ENCODE measurements at regions of chr3 and their contacts with region 1.

Region 1: GRCh38 chr3:138915503-138916498 is 31.1 kb downstream of the FOXL2 start:
- DNase-seq: peak; percentile 72 to 79 (median 75)
- H3K4me3 ChIP-seq: peak overlapping the region; percentile 69 to 73
- H3K4me3 Mint-ChIP-seq: peak overlapping the region; percentile 69 to 89 (median 86)
- H3K27ac ChIP-seq: peak overlapping the region; percentile 27
- H3K27ac Mint-ChIP-seq: peak overlapping the region in 6 of 7 donors; percentile 8 to 75 (median 62)
- H3K4me1 ChIP-seq: peaks cover 7% of the 10 kb centered on the region
- H3K4me1 Mint-ChIP-seq: peaks cover 3 to 6% (median 4%) of the 10 kb centered on the region in 4 donors
- H3K27me3 ChIP-seq: no peaks in the 10 kb centered on the region
- H3K27me3 Mint-ChIP-seq: peaks cover 2 to 6% of the 10 kb centered on the region in 2 donors

Region 2: DNA sequence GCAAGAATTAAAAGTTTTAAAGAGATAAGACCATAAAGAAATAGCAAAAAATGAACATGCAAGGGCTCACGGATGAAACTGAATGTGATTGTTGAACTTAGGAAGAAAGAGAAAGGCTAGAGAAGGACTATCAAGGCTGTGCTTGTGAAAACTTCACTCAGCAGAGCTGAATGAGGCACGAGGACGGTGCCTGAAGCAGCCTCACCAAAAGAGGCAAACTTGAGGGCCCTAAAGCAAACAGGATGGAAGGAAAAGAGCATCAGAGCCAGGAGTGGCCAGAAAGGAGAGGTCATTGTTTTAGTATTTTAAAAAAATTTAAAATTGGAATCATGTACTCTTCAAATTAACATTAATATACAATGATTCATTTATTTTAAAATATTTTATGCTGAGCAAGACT is 1342.9 kb before region 1 on chr3:
- CTCF ChIA-PET with region 1: no interaction called
- POLR2A ChIA-PET with region 1: no interaction called
- intact Hi-C with region 1: no loop called
- DNase-seq: no peak
- H3K4me3 ChIP-seq: no peak overlapping the region
- H3K4me3 Mint-ChIP-seq: no peak overlapping the region
- H3K27ac ChIP-seq: no peak overlapping the region
- H3K27ac Mint-ChIP-seq: no peak overlapping the region
- H3K4me1 ChIP-seq: no peaks in the 10 kb centered on the region
- H3K4me1 Mint-ChIP-seq: no peaks in the 10 kb centered on the region
- H3K27me3 ChIP-seq: no peaks in the 10 kb centered on the region
- H3K27me3 Mint-ChIP-seq: no peaks in the 10 kb centered on the region

Region 3: GRCh38 chr3:138329127-138329983 is 586.4 kb before region 1 on chr3 and contains the start of gene NME9:
- CTCF ChIA-PET with region 1: interaction called, 4 read pairs
- POLR2A ChIA-PET with region 1: no interaction called
- intact Hi-C with region 1: loop called (anchors 5 kb)
- DNase-seq: peak; percentile 85 to 90 (median 89)
- H3K4me3 ChIP-seq: peak within 1 kb of the TSS; percentile 49 to 68
- H3K4me3 Mint-ChIP-seq: peak within 1 kb of the TSS; percentile 95 to 99 (median 98)
- H3K27ac ChIP-seq: peak within 1 kb of the TSS; percentile 72
- H3K27ac Mint-ChIP-seq: peak within 1 kb of the TSS; percentile 81 to 99 (median 98)
- H3K4me1 ChIP-seq: peaks cover 10% of the 10 kb centered on the region
- H3K4me1 Mint-ChIP-seq: peaks cover 17 to 41% (median 25%) of the 10 kb centered on the region in 4 donors
- H3K27me3 ChIP-seq: no peaks in the 10 kb centered on the region
- H3K27me3 Mint-ChIP-seq: no peaks in the 10 kb centered on the region
- total RNA-seq, gene NME9: 1.0 to 1.4 TPM

Region 4: GRCh38 chr3:138686771-138687221 is 229.0 kb before region 1 on chr3:
- CTCF ChIA-PET with region 1: interaction called, 739 read pairs
- POLR2A ChIA-PET with region 1: no interaction called
- intact Hi-C with region 1: no loop called
- DNase-seq: no peak
- H3K4me3 ChIP-seq: no peak overlapping the region
- H3K4me3 Mint-ChIP-seq: no peak overlapping the region
- H3K27ac ChIP-seq: no peak overlapping the region
- H3K27ac Mint-ChIP-seq: peak overlapping the region in 2 of 7 donors; percentile 2 to 52
- H3K4me1 ChIP-seq: no peaks in the 10 kb centered on the region
- H3K4me1 Mint-ChIP-seq: no peaks in the 10 kb centered on the region
- H3K27me3 ChIP-seq: no peaks in the 10 kb centered on the region
- H3K27me3 Mint-ChIP-seq: no peaks in the 10 kb centered on the region

Region 5: GRCh38 chr3:138717348-138717747 is 198.5 kb before region 1 on chr3:
- CTCF ChIA-PET with region 1: interaction called, 24 read pairs
- POLR2A ChIA-PET with region 1: interaction called, 3 read pairs
- intact Hi-C with region 1: no loop called
- DNase-seq: no peak
- H3K4me3 ChIP-seq: no peak overlapping the region
- H3K4me3 Mint-ChIP-seq: no peak overlapping the region
- H3K27ac ChIP-seq: no peak overlapping the region
- H3K27ac Mint-ChIP-seq: no peak overlapping the region
- H3K4me1 ChIP-seq: no peaks in the 10 kb centered on the region
- H3K4me1 Mint-ChIP-seq: peaks cover 1 to 6% (median 5%) of the 10 kb centered on the region in 4 donors
- H3K27me3 ChIP-seq: no peaks in the 10 kb centered on the region
- H3K27me3 Mint-ChIP-seq: no peaks in the 10 kb centered on the region

Region 6: GRCh38 chr3:138747225-138747624 is 168.6 kb before region 1 on chr3:
- CTCF ChIA-PET with region 1: interaction called, 17 read pairs
- POLR2A ChIA-PET with region 1: no interaction called
- intact Hi-C with region 1: no loop called
- DNase-seq: no peak
- H3K4me3 ChIP-seq: no peak overlapping the region
- H3K4me3 Mint-ChIP-seq: no peak overlapping the region
- H3K27ac ChIP-seq: no peak overlapping the region
- H3K27ac Mint-ChIP-seq: peak overlapping the region in 1 of 7 donors; percentile 3
- H3K4me1 ChIP-seq: no peaks in the 10 kb centered on the region
- H3K4me1 Mint-ChIP-seq: peaks cover 0 to 7% (median 5%) of the 10 kb centered on the region in 4 donors
- H3K27me3 ChIP-seq: no peaks in the 10 kb centered on the region
- H3K27me3 Mint-ChIP-seq: no peaks in the 10 kb centered on the region

Region 7: DNA sequence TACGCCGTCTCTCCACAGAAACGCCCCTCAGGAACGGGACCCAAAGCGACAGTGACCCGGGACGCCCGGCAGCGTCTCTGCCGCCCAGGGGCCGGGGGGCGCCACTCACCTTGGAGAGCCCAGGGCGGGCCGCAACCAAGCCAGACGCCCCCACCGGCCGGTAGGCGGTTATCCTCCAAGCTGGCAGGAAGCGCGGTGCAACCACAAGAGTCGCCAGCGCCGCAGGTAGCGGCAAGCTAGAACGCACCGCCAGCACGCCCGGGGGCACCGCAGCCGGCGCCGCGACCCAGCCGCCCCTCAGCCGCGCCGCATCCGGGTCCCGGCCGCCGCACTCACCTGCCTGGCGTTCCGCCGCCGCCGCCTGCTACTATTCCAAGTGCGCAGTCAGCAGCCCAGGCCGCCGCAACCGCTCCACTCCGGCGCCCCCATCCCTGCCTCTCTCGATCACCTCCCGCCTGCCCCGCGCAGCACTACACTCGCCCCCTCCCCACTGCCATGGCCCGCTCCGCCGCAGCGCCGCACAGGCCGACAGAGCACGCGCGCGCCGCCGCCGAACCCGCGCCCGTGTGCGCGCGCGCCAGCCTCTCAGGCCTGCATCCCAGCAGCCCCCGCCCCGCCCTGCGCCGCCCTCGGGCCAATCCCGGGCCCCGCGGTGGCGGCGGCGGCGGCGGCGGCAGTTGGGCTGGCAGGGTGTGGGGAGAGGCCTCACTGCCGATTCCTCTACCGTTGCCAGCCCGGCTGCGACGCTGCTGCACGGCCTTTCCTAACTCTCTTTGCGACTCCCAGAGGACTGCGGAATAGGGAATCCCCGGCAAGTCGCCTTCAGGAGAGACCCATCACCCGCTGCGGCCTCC is 81.2 kb before region 1 on chr3 and contains the start of gene PIK3CB:
- CTCF ChIA-PET with region 1: interaction called, 17 read pairs
- POLR2A ChIA-PET with region 1: interaction called, 4 read pairs
- intact Hi-C with region 1: loop called (anchors 1 kb)
- DNase-seq: peak; percentile 81 to 89 (median 88)
- H3K4me3 ChIP-seq: peak within 1 kb of the TSS; percentile 64 to 76
- H3K4me3 Mint-ChIP-seq: peak within 1 kb of the TSS; percentile 90 to 98 (median 95)
- H3K27ac ChIP-seq: peak within 1 kb of the TSS; percentile 76
- H3K27ac Mint-ChIP-seq: peak within 1 kb of the TSS; percentile 96 to 99 (median 97)
- H3K4me1 ChIP-seq: peaks cover 21% of the 10 kb centered on the region
- H3K4me1 Mint-ChIP-seq: peaks cover 19 to 37% (median 29%) of the 10 kb centered on the region in 4 donors
- H3K27me3 ChIP-seq: no peaks in the 10 kb centered on the region
- H3K27me3 Mint-ChIP-seq: no peaks in the 10 kb centered on the region
- total RNA-seq, gene PIK3CB: 44.8 to 52.1 TPM